Astrocyte of the cerebellum (primary cell): ENCODE measurements at regions of chr12 and their contacts with region 1.

Region 1: GRCh38 chr12:29996993-29997392 is 213.3 kb upstream of the TMTC1 start:
- DNase-seq: no peak
- H3K4me3 ChIP-seq: no peak overlapping the region
- CTCF ChIP-seq: no peak

Region 2: DNA sequence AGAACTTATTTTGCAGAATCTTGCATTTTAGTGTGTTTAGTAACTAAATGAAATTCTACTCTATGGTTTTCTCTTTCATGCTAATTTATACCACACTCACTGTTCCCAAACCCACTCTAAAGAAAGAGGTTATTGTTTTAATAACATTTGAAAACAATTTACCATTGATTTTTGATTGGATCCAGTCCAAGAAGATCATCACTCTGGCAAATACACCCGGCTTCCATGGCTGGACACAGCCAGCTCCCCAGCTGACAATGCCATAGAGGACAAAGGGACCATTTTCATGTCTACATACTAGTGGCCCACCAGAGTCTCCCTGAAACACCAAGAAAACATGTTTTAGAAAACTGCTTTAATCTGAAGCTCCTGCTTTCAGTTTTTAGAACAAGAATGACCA is 541.9 kb before region 1 on chr12:
- in situ Hi-C with region 1: no loop called
- DNase-seq: no peak
- H3K4me3 ChIP-seq: no peak overlapping the region
- CTCF ChIP-seq: no peak

Region 3: DNA sequence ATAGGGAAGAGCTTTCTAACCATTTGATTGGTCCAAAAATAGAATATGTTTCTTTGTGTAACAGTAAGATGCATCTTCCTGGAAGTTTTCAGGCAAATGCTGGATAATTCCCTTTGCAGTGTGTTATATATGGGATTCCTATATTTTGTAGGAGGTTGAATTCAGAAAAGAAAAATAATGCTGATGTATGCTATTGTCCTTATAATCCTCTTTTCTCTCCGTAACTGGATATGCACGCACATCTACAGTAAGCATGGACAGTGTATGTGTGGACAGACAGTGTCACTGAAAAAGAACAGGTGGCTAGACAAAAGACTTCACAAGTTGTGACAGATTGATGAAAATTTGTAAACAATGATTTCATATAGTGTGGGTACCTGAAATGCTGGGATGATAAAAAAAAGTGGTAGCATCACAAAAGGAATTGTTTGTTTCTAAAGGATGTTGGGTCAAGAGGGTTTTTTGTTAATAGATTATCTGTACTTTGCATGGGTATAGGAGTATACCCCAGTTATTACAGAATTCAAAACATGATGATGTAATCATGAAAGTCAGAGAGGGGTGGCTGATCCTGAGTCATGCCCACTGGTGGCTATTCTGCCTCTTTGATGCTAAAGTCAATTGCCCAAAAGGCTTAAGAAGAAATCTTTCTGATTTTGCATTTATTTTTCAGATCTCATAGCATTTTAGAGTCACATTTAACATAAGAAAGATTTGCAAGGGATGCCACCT is 52.6 kb before region 1 on chr12:
- in situ Hi-C with region 1: loop called (anchors 5 kb)
- DNase-seq: no peak
- H3K4me3 ChIP-seq: no peak overlapping the region
- CTCF ChIP-seq: no peak